Naive thymus-derived CD4-positive, alpha-beta T cell (primary cell): ENCODE measurements at regions of chr9 and their contacts with region 1.

Region 1: GRCh38 chr9:74577956-74578355 is 80.8 kb downstream of the RORB start:
- DNase-seq: no peak
- ATAC-seq: no peak
- H3K4me3 ChIP-seq: no peak overlapping the region
- H3K4me3 Mint-ChIP-seq: no peak overlapping the region
- H3K27ac ChIP-seq: no peak overlapping the region
- H3K27ac Mint-ChIP-seq: no peak overlapping the region
- H3K4me1 ChIP-seq: no peaks in the 10 kb centered on the region
- H3K4me1 Mint-ChIP-seq: no peaks in the 10 kb centered on the region
- H3K27me3 ChIP-seq: no peaks in the 10 kb centered on the region
- H3K27me3 Mint-ChIP-seq: peaks cover 0 to 2% (median 0%) of the 10 kb centered on the region in 5 donors

Region 2: GRCh38 chr9:74534841-74535240 is 43.1 kb before region 1 on chr9:
- CTCF ChIA-PET with region 1: no interaction called
- POLR2A ChIA-PET with region 1: no interaction called
- intact Hi-C with region 1: no loop called
- DNase-seq: no peak
- ATAC-seq: no peak
- H3K4me3 ChIP-seq: no peak overlapping the region
- H3K4me3 Mint-ChIP-seq: no peak overlapping the region
- H3K27ac ChIP-seq: no peak overlapping the region
- H3K27ac Mint-ChIP-seq: no peak overlapping the region
- H3K4me1 ChIP-seq: no peaks in the 10 kb centered on the region
- H3K4me1 Mint-ChIP-seq: peaks cover 0 to 1% (median 0%) of the 10 kb centered on the region in 7 donors
- H3K27me3 ChIP-seq: no peaks in the 10 kb centered on the region
- H3K27me3 Mint-ChIP-seq: peaks cover 0 to 11% (median 0%) of the 10 kb centered on the region in 5 donors

Region 3: DNA sequence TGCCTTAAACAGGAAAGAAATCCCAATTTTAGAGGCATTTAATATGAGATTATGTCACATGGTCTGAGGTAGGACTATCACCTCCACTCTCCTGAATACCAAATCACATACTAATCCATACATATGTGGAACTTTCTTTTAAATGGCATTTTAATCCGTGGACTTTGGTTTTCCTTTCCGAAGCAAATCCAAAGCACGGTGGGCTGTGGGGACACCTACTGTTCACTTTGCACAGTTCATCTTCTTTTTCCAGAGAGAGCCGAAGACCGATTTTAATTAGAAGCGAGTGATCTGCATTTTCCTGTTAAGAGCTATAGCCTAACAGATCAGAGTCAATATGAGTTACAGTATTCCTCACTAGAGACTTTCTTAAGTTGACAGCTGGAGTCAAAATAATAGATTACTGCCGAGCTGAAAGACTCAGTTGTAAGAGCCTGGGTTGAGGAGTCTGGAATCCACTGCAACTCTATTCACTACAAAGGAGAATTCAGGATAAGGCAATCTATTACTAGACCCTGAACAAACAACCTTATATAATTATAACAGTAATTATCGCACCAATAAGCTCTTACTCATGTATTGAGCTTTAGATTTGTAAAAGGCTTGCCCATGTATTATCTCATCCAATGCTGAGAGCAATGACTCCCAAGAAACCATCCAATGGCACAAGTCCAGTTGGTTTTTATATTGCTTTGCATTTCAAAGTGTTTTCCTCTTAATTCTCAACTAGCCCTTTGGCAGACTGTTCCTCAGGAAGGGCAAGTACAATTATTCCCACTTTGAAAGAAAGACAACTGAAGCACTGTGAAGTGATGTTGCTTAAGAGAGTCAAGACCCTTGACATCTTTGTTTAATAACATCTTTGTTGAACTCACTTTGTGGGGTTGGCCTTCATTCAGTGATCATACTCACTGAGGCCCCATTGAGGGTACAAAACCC is 165.1 kb after region 1 on chr9:
- CTCF ChIA-PET with region 1: no interaction called
- POLR2A ChIA-PET with region 1: no interaction called
- intact Hi-C with region 1: loop called in 1 of 2 experiments (anchors 2 kb)
- DNase-seq: peak in 1 of 9 donors; percentile 1
- ATAC-seq: no peak
- H3K4me3 ChIP-seq: no peak overlapping the region
- H3K4me3 Mint-ChIP-seq: peak overlapping the region in 1 of 10 donors; percentile 11
- H3K27ac ChIP-seq: no peak overlapping the region
- H3K27ac Mint-ChIP-seq: no peak overlapping the region
- H3K4me1 ChIP-seq: no peaks in the 10 kb centered on the region
- H3K4me1 Mint-ChIP-seq: peaks cover 0 to 3% (median 0%) of the 10 kb centered on the region in 7 donors
- H3K27me3 ChIP-seq: no peaks in the 10 kb centered on the region
- H3K27me3 Mint-ChIP-seq: peaks cover 25 to 62% (median 38%) of the 10 kb centered on the region in 5 donors